ENCODE measurements at regions of chr2 and their contacts with region 1.

Region 1: GRCh38 chr2:157751462-157752058 is 122.9 kb upstream of the ACVR1C start:
- DNase-seq: peak; percentile 45
- H3K4me3 ChIP-seq: no peak overlapping the region
- H3K27ac ChIP-seq: no peak overlapping the region
- H3K4me1 ChIP-seq: no peaks in the 10 kb centered on the region
- CTCF ChIP-seq: peak; percentile 80

Region 2: DNA sequence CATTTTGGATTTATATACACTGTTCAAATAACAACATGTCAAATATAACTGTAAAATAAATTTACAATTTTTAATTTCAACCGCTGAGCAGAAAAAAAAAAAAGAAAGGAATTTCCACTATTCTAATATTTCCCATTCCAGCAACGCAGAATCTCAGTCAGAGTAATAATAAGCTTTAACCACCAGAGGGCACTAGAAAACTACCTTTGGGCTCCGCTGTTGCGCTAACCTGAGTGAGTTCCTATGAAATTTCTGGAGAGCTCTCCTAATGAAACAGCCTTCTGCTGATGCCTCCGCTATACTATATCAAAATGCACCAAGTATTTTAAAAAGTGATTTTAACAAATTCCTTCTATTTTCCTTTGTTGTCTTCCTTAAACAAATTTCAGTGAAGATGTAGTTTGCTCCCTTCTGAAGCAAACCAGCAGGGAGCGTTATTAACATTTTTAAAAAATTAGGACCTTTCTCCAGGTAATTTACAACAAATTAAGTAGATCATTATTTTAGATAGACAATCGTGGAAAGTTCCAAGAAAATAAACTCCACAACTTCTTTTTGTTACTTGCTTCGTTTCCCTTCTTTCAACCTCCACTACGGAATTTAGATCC is 449.0 kb before region 1 on chr2:
- CTCF ChIA-PET with region 1: no interaction called
- POLR2A ChIA-PET with region 1: no interaction called
- intact Hi-C with region 1: loop called (anchors 5 kb)
- DNase-seq: peak; percentile 67
- H3K4me3 ChIP-seq: no peak overlapping the region
- H3K27ac ChIP-seq: no peak overlapping the region
- H3K4me1 ChIP-seq: no peaks in the 10 kb centered on the region
- CTCF ChIP-seq: peak; percentile 98

Measured in OCI-LY7 (cell line).